CD4-positive, alpha-beta memory T cell (primary cell): ENCODE measurements at regions of chr1 and their contacts with region 1.

Region 1: GRCh38 chr1:145845514-145846161 is at the start of gene NUDT17:
- DNase-seq: peak; percentile 67 to 75 (median 68)
- H3K4me3 ChIP-seq: peak within 1 kb of the TSS; percentile 18 to 77
- H3K4me3 Mint-ChIP-seq: no peak within 1 kb of the TSS
- H3K27ac ChIP-seq: peak within 1 kb of the TSS; percentile 63
- H3K27ac Mint-ChIP-seq: peak within 1 kb of the TSS in 6 of 7 donors; percentile 43 to 91 (median 81)
- H3K4me1 ChIP-seq: peaks cover 11% of the 10 kb centered on the region
- H3K4me1 Mint-ChIP-seq: peaks cover 6 to 7% (median 6%) of the 10 kb centered on the region in 4 donors
- H3K27me3 ChIP-seq: no peaks in the 10 kb centered on the region
- H3K27me3 Mint-ChIP-seq: no peaks in the 10 kb centered on the region
- total RNA-seq, gene NUDT17: 3.1 to 5.6 TPM

Region 2: GRCh38 chr1:145871994-145872924 is 26.6 kb after region 1 on chr1:
- CTCF ChIA-PET with region 1: interaction called, 57 read pairs
- POLR2A ChIA-PET with region 1: interaction called, 18 read pairs
- intact Hi-C with region 1: loop called (anchors 2 kb)
- DNase-seq: peak in 4 of 5 donors; percentile 31 to 42 (median 40)
- H3K4me3 ChIP-seq: peak overlapping the region in 1 of 2 donors; percentile 51
- H3K4me3 Mint-ChIP-seq: peak overlapping the region; percentile 75 to 84 (median 82)
- H3K27ac ChIP-seq: peak overlapping the region; percentile 11
- H3K27ac Mint-ChIP-seq: peak overlapping the region in 6 of 7 donors; percentile 38 to 81 (median 68)
- H3K4me1 ChIP-seq: peaks cover 14% of the 10 kb centered on the region
- H3K4me1 Mint-ChIP-seq: peaks cover 13 to 20% (median 17%) of the 10 kb centered on the region in 4 donors
- H3K27me3 ChIP-seq: no peaks in the 10 kb centered on the region
- H3K27me3 Mint-ChIP-seq: peaks cover 4 to 6% of the 10 kb centered on the region in 2 donors

Region 3: DNA sequence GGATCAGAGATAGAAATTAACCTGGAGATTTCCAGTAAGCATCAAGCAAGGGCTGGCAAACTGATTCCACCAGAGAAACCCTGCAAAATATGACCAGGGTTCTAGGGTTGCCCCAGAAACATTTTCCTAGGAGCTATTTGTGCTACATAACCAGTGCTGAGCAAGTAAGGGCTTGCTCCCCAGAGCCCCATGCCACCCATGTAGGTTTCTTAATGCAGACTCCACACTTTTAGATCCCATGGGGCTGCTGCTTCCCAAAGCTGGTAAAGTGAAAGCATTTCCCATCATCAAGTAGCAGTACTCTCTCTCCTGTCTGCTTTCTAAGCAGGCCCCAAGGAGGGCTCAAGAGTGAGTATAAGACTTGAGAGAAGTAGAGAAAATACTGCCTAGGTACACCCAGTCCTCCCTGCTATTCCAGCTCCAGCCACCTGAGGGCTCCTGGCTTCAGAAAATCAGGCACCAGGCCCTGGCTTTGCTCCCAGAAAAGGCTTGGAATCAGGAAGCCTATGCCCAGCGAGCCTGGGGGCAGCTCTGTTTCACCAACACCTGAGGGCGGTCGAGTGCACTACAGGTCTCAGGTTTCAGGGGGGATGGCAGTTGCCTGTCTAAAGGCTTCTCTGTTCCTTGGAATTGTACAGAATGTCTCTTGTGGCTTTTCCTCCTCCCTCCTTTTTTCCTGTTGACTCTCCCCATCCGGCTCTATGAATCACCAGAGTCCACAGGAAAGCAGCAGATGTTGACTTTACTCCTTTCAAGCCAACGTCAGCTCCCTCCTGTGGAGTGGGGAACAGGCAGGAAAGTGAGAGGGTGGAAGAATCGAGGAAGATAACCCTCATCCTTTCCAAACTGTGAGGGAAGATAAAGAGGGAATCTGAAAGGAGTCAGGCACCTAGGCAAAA is 46.2 kb after region 1 on chr1:
- CTCF ChIA-PET with region 1: interaction called, 78 read pairs
- POLR2A ChIA-PET with region 1: interaction called, 9 read pairs
- intact Hi-C with region 1: no loop called
- DNase-seq: peak; percentile 21 to 50 (median 38)
- H3K4me3 ChIP-seq: no peak overlapping the region
- H3K4me3 Mint-ChIP-seq: no peak overlapping the region
- H3K27ac ChIP-seq: no peak overlapping the region
- H3K27ac Mint-ChIP-seq: no peak overlapping the region
- H3K4me1 ChIP-seq: no peaks in the 10 kb centered on the region
- H3K4me1 Mint-ChIP-seq: peaks cover 0 to 2% (median under 1%) of the 10 kb centered on the region in 4 donors
- H3K27me3 ChIP-seq: no peaks in the 10 kb centered on the region
- H3K27me3 Mint-ChIP-seq: peaks cover 0 to under 1% of the 10 kb centered on the region in 2 donors

Region 4: DNA sequence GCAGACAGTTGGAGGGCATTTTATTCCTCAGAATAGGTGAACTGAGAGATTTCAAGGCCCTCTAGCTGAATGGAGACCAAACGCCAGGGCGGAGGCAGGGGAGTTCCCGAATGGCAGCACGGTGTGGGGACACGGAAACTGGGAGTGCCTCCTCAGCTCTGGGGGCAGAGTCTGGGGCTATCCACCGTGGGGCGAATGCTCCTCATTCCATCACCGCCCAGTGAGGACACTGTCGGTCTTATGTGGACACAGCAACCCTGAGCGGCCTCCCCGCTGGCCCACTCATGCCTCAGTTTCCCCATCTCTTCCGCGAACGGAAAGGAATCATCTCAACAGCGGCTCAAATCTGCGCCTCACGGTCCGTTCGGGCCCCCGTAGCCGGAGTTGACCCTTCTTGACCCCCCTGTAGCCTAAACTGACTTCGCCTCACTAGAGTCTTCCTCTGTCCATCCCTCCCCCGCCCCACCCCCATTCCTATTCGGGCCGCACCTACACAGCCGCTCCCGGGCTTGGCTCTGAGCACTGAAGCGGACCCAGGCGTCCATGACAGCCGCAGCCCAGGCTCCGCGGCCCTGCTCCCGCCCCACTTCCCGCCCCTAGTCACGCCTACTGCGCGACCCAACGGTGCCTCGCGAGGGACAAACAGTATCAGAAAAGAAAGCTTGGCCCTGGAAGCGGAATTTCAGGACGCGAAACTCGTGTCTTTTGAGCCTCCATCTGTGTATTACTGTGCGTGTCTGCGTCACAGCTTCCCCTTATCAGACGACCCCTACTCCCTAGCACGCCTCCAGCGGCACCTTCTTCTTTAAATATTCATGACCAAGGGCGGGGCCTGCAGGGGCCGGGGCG is 72.7 kb after region 1 on chr1 and contains the start of gene PEX11B:
- CTCF ChIA-PET with region 1: interaction called, 45 read pairs
- POLR2A ChIA-PET with region 1: interaction called, 11 read pairs
- intact Hi-C with region 1: no loop called
- DNase-seq: peak; percentile 90 to 96 (median 92)
- H3K4me3 ChIP-seq: peak within 1 kb of the TSS; percentile 90 to 96
- H3K4me3 Mint-ChIP-seq: peak within 1 kb of the TSS; percentile 89 to 96 (median 92)
- H3K27ac ChIP-seq: peak within 1 kb of the TSS; percentile 79
- H3K27ac Mint-ChIP-seq: peak within 1 kb of the TSS; percentile 91 to 97 (median 95)
- H3K4me1 ChIP-seq: peaks cover 28% of the 10 kb centered on the region
- H3K4me1 Mint-ChIP-seq: peaks cover 24 to 45% (median 35%) of the 10 kb centered on the region in 4 donors
- H3K27me3 ChIP-seq: no peaks in the 10 kb centered on the region
- H3K27me3 Mint-ChIP-seq: no peaks in the 10 kb centered on the region
- total RNA-seq, gene PEX11B: 34.7 to 38.7 TPM

Region 5: GRCh38 chr1:145963995-145964901 is 118.6 kb after region 1 on chr1 and contains the starts of genes ANKRD34A and POLR3GL:
- CTCF ChIA-PET with region 1: interaction called, 40 read pairs
- POLR2A ChIA-PET with region 1: interaction called, 11 read pairs
- intact Hi-C with region 1: no loop called
- DNase-seq: peak; percentile 88 to 97 (median 90)
- H3K4me3 ChIP-seq: peak within 1 kb of the TSS; percentile 65 to 94
- H3K4me3 Mint-ChIP-seq: peak within 1 kb of the TSS; percentile 89 to 95 (median 93)
- H3K27ac ChIP-seq: peak within 1 kb of the TSS; percentile 71
- H3K27ac Mint-ChIP-seq: peak within 1 kb of the TSS; percentile 89 to 99 (median 98)
- H3K4me1 ChIP-seq: peaks cover 62% of the 10 kb centered on the region
- H3K4me1 Mint-ChIP-seq: peaks cover 32 to 72% (median 45%) of the 10 kb centered on the region in 4 donors
- H3K27me3 ChIP-seq: no peaks in the 10 kb centered on the region
- H3K27me3 Mint-ChIP-seq: no peaks in the 10 kb centered on the region
- total RNA-seq, gene ANKRD34A: 1.8 to 2.1 TPM
- total RNA-seq, gene POLR3GL: 36.6 to 38.3 TPM

Region 6: GRCh38 chr1:146012737-146013403 is 167.2 kb after region 1 on chr1:
- CTCF ChIA-PET with region 1: interaction called, 264 read pairs
- POLR2A ChIA-PET with region 1: interaction called, 11 read pairs
- intact Hi-C with region 1: loop called (anchors 1 kb)
- DNase-seq: peak; percentile 65 to 73 (median 69)
- H3K4me3 ChIP-seq: no peak overlapping the region
- H3K4me3 Mint-ChIP-seq: no peak overlapping the region
- H3K27ac ChIP-seq: no peak overlapping the region
- H3K27ac Mint-ChIP-seq: no peak overlapping the region
- H3K4me1 ChIP-seq: peaks cover under 1% of the 10 kb centered on the region
- H3K4me1 Mint-ChIP-seq: peaks cover 6 to 9% (median 7%) of the 10 kb centered on the region in 4 donors
- H3K27me3 ChIP-seq: no peaks in the 10 kb centered on the region
- H3K27me3 Mint-ChIP-seq: peaks cover 2 to 4% of the 10 kb centered on the region in 2 donors

Region 7: GRCh38 chr1:146036965-146037646 is 191.5 kb after region 1 on chr1:
- CTCF ChIA-PET with region 1: interaction called, 14 read pairs
- POLR2A ChIA-PET with region 1: interaction called, 9 read pairs
- intact Hi-C with region 1: no loop called
- DNase-seq: peak; percentile 82 to 85 (median 84)
- H3K4me3 ChIP-seq: peak overlapping the region; percentile 65 to 77
- H3K4me3 Mint-ChIP-seq: peak overlapping the region; percentile 93 to 99 (median 97)
- H3K27ac ChIP-seq: peak overlapping the region; percentile 62
- H3K27ac Mint-ChIP-seq: peak overlapping the region; percentile 94 to 100 (median 97)
- H3K4me1 ChIP-seq: peaks cover 25% of the 10 kb centered on the region
- H3K4me1 Mint-ChIP-seq: peaks cover 16 to 56% (median 29%) of the 10 kb centered on the region in 4 donors
- H3K27me3 ChIP-seq: no peaks in the 10 kb centered on the region
- H3K27me3 Mint-ChIP-seq: peaks cover 2 to 27% of the 10 kb centered on the region in 2 donors